BJ (cell line): ENCODE measurements at regions of chr15 and their contacts with region 1.

Region 1: DNA sequence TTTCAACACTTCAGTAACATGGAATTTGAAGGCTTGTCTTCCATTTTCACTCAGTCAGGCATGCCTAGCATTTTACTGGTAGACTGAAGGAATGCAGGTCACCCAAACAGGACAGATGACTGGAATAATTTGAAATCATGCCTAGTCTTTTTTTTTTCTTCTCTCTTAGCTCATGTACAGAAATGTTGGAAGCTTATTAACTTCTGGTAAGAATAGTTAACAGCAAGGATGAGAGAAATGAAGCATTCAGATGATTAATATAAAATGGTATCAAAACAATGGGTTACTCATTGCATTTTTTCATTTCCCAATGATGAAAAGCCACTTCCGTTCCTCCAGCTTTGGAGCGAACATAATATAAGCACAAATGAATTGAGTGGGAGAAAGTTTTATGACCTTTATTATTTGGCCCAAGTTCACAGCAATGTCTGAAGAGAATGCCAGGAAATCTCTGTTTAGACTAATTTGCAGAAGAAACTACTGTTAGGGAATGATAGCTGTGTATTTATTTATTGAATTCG is 431.6 kb upstream of the RASGRP1 start:
- DNase-seq: peak; percentile 95
- H3K4me3 ChIP-seq: no peak overlapping the region
- H3K27me3 ChIP-seq: no peaks in the 10 kb centered on the region
- CTCF ChIP-seq: no peak

Region 2: DNA sequence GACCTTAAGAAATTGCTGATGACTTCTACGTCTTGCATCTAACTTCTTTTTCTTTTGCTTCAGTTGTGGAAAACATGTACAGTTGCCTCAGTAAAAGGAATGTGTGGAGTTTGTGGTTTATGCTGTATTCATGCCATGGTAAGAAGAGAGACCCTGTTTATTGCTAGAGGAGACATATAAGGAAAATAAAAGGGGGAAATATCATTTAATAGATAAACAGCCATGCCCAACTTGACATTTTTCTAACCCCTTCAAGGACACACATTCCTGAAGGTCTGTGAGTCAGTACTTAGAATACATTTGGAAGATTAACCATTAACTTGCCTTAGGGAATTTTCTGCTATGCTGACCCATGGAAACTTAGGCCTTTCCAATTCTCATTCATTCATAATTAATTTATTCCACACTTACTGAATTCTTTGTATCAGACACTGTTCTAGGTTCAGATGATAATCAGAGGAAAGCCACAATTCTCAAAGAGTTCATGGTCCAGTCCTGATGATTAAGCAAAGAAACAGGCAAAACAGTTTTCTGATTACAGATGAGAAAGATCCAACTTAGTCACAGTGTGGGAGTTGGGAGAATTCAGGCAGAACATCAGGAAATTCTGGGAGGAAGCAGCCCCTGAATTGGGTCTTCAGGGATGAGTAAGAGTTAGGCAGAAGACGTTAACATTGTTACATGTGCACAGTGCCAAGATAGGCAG is 101.8 kb before region 1 on chr15:
- CTCF ChIA-PET with region 1: interaction called, 4 read pairs
- POLR2A ChIA-PET with region 1: interaction called, 14 read pairs
- DNase-seq: peak; percentile 87
- H3K4me3 ChIP-seq: no peak overlapping the region
- H3K27me3 ChIP-seq: no peaks in the 10 kb centered on the region
- CTCF ChIP-seq: no peak

Region 3: GRCh38 chr15:38961931-38962330 is 34.2 kb before region 1 on chr15:
- CTCF ChIA-PET with region 1: no interaction called
- POLR2A ChIA-PET with region 1: no interaction called
- DNase-seq: no peak
- H3K4me3 ChIP-seq: no peak overlapping the region
- H3K27me3 ChIP-seq: no peaks in the 10 kb centered on the region
- CTCF ChIP-seq: no peak

Region 4: DNA sequence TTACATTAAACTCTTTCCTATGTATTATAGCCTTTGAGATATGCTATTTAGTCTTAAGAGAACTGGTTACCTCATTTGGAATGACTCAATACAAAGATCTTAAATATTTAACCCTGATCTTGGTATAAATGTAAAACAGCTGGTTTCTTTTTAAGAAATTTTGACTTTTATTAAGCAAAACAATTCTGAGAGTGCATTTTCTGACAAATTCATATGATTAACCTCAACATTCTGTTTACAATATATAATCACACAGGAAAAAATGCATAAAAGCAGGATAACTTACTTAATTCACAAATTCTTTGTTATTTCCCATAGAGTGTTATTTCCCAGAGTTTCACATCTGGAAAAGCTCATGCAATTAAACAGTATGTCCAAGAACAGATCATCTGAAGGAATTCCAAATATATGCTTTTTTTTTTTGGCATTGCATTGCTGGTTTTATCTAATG is 184.3 kb after region 1 on chr15:
- CTCF ChIA-PET with region 1: no interaction called
- POLR2A ChIA-PET with region 1: interaction called, 10 read pairs
- DNase-seq: peak; percentile 94
- H3K4me3 ChIP-seq: no peak overlapping the region
- H3K27me3 ChIP-seq: no peaks in the 10 kb centered on the region
- CTCF ChIP-seq: no peak

Region 5: DNA sequence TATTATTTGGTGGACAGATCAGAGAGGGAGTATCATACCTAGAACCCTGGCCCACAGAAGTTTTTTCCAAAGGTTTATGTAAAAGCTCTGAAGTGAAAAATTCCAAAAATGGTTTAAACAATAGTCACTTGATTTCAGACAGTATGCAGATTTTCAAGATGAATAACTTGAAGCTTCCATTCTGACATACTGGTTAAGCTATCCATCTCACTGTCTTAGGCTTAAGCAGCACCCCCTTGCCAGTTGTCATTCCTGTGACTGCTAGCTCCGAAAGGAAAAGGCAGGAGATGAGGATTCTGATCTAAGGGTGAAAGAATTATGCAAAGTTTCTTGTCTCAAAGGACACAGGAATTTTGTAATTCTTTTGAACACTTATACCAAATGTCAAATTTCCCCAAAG is 247.2 kb after region 1 on chr15:
- CTCF ChIA-PET with region 1: no interaction called
- POLR2A ChIA-PET with region 1: no interaction called
- DNase-seq: no peak
- H3K4me3 ChIP-seq: no peak overlapping the region
- H3K27me3 ChIP-seq: no peaks in the 10 kb centered on the region
- CTCF ChIP-seq: no peak

Region 6: DNA sequence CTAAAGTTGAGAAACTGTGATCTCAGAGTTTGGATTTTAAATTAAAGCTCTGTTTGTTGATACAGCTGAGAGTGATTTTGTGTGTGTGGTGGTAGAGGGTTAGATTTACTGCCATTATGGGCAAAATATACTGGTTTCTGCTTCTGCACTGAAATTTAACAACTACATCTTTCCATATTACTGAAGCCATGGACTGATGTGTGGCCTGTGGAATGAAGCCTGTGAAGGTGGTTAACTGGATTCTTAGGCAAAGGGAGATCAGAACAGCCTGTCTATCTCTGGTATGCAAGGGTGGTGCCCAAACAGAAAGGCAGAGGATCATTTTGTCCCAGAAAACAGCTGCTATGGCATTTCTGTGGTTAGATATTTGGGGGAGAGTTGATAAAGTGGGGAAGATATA is 287.4 kb after region 1 on chr15:
- CTCF ChIA-PET with region 1: no interaction called
- POLR2A ChIA-PET with region 1: interaction called, 12 read pairs
- DNase-seq: no peak
- H3K4me3 ChIP-seq: no peak overlapping the region
- H3K27me3 ChIP-seq: no peaks in the 10 kb centered on the region
- CTCF ChIP-seq: no peak